HCT116 (cell line): ENCODE measurements at regions of chrX and their contacts with region 1.

Region 1: DNA sequence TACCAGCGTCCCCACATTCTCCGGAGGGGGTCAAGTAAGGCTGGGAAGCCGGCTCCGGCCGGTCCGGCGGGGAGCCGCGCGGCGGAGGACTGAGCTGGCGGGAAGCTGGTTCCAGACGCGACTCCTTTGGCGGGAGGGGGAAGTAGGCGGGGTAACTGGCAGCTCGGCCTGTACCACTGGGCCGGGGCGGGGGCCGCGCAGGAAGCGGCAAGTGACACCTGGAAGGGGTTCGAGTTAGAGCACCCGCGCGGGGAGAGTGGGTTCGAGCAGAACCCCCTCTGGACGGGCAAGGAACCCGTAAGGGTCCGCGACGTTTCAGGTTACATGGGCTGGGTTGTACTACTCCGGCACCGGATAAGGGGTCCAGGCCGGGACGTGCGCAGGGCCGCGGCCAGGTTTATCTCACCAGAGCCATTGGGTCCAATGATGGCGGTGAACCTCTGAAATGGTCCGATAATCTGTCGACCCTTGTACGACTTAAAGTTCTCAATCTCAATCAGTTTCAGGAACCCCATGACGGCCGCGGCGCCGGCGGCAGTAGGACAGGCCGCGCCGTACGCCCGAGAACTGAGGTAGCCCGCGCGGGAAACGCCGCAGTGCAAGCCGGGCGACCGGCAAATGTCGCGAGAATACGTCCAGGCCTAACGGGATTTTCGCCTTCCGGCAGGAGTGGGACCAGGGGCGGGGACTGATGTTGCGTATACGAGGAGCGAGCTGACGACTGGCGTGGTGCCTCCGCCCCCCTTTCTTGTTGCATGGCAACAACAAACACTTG is at the start of gene SMC1A:
- DNase-seq: peak; percentile 90
- ATAC-seq: peak; percentile 95
- H3K4me3 ChIP-seq: peak within 1 kb of the TSS; percentile 73 to 85
- H3K27ac ChIP-seq: peak within 1 kb of the TSS; percentile 92
- H3K4me1 ChIP-seq: peaks cover 8 to 17% of the 10 kb centered on the region in 2 experiments
- H3K27me3 ChIP-seq: no peaks in the 10 kb centered on the region
- CTCF ChIP-seq: no peak
- POLR2A ChIP-seq: no peak
- RAD21 ChIP-seq: no peak
- total RNA-seq, gene SMC1A: 88.3 TPM

Region 2: DNA sequence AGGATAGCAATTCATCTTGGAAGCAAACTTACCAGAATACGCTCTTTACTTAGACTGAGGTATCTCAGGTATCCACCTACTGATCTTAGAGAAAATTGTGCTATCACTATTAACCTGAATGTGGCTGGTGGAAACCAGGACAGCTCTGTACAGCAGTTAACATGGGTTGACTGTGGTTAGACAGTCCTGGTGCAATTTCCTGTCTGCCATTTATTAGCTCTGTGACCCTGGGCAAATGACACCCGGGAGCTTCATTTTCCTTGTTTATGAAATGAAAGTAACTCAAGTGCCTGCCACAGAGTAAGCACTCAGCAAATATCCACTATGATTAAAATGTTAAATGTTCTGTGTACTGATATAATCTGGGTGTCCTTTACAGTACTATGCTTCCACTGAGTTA is 59.8 kb before region 1 on chrX:
- CTCF ChIA-PET with region 1: no interaction called
- POLR2A ChIA-PET with region 1: no interaction called
- RAD21 ChIA-PET with region 1: no interaction called
- intact Hi-C with region 1: no loop called
- DNase-seq: no peak
- ATAC-seq: no peak
- H3K4me3 ChIP-seq: no peak overlapping the region
- H3K27ac ChIP-seq: no peak overlapping the region
- H3K4me1 ChIP-seq: no peaks in the 10 kb centered on the region
- H3K27me3 ChIP-seq: no peaks in the 10 kb centered on the region
- CTCF ChIP-seq: no peak
- POLR2A ChIP-seq: no peak
- RAD21 ChIP-seq: no peak

Region 3: GRCh38 chrX:53435997-53436396 is 13.7 kb after region 1 on chrX:
- CTCF ChIA-PET with region 1: interaction called, 3 read pairs
- POLR2A ChIA-PET with region 1: interaction called, 11 read pairs
- RAD21 ChIA-PET with region 1: no interaction called
- intact Hi-C with region 1: no loop called
- DNase-seq: peak; percentile 51
- ATAC-seq: peak; percentile 62
- H3K4me3 ChIP-seq: no peak overlapping the region
- H3K27ac ChIP-seq: no peak overlapping the region
- H3K4me1 ChIP-seq: peaks cover 7 to 23% of the 10 kb centered on the region in 2 experiments
- H3K27me3 ChIP-seq: no peaks in the 10 kb centered on the region
- CTCF ChIP-seq: peak in 2 of 3 experiments; percentile 64 to 81; a peak in 4 of 6 replicates
- POLR2A ChIP-seq: no peak
- RAD21 ChIP-seq: no peak